H1 (cell line): ENCODE measurements at regions of chr12 and their contacts with region 1.

Region 1: GRCh38 chr12:6267139-6267721 is 43.3 kb upstream of the PLEKHG6 start:
- DNase-seq: no peak
- H3K4me3 ChIP-seq: no peak overlapping the region
- H3K27ac ChIP-seq: no peak overlapping the region
- H3K4me1 ChIP-seq: peaks cover 9 to 17% (median 13%) of the 10 kb centered on the region in 4 experiments
- H3K27me3 ChIP-seq: no peaks in the 10 kb centered on the region
- CTCF ChIP-seq: no peak
- EP300 ChIP-seq: no peak
- POLR2A ChIP-seq: no peak
- RAD21 ChIP-seq: no peak

Region 2: GRCh38 chr12:6201199-6201608 is 66.0 kb before region 1 on chr12:
- CTCF ChIA-PET with region 1: interaction called, 433 read pairs
- POLR2A ChIA-PET with region 1: interaction called, 14 read pairs
- DNase-seq: no peak
- H3K4me3 ChIP-seq: peak overlapping the region; percentile 65 to 85 (median 83)
- H3K27ac ChIP-seq: no peak overlapping the region
- H3K4me1 ChIP-seq: peaks cover 20 to 60% (median 41%) of the 10 kb centered on the region in 4 experiments
- H3K27me3 ChIP-seq: peaks cover 0 to 10% (median 6%) of the 10 kb centered on the region in 4 experiments; a peak in 3 of 7 replicates
- CTCF ChIP-seq: no peak
- EP300 ChIP-seq: no peak
- POLR2A ChIP-seq: no peak
- RAD21 ChIP-seq: no peak